ENCODE measurements at regions of chr3 and their contacts with region 1.

Region 1: DNA sequence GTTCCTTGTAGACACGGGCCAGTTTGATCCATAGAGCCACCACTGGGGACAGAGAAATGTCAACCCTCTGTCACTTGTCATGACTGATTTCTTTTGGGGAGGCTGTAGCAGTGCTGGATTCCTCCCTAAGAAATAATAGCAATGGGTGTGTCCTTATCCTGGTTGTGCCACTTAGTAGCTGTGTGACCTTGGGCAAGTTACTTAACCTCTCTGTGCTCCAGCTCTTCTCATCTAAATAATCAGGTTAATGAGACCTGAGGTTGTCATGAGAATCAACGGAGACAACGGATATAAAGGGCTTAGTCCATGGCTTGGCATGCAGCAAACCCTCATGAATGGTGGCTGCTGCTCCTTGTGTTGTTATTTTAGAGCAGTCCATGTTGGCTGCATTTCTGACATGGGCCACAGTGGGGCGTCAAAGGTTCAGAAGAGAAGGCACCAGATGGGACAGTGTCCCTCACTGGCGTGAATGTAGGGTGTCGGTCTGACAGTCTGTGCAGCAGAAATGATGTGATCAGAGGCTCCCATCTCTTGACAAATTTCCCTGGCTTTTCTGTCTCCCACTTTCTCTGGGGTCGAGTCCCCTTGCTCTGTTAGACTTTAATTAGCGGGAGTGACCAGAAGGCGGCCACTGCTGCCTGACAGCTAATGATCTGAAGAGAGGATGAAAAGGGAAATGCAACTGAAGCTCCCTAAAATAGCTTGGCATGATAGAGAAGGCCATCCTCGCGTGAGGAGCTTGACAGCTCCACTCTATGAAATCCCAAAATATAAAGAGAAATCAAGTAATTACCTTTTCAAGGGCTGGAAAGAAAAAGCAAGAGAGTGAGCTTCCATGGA is 209.4 kb downstream of the CADPS start:
- DNase-seq: peak; percentile 85
- H3K4me3 Mint-ChIP-seq: no peak overlapping the region
- H3K27ac Mint-ChIP-seq: no peak overlapping the region
- H3K4me1 Mint-ChIP-seq: peaks cover 7% of the 10 kb centered on the region
- H3K27me3 Mint-ChIP-seq: no peaks in the 10 kb centered on the region
- CTCF ChIP-seq: peak; percentile 86

Region 2: GRCh38 chr3:62622553-62623193 is 43.1 kb before region 1 on chr3:
- CTCF ChIA-PET with region 1: interaction called, 22 read pairs
- POLR2A ChIA-PET with region 1: no interaction called
- intact Hi-C with region 1: loop called (anchors 1 kb)
- DNase-seq: peak; percentile 68
- H3K4me3 Mint-ChIP-seq: no peak overlapping the region
- H3K27ac Mint-ChIP-seq: no peak overlapping the region
- H3K4me1 Mint-ChIP-seq: peaks cover 6% of the 10 kb centered on the region
- H3K27me3 Mint-ChIP-seq: no peaks in the 10 kb centered on the region
- CTCF ChIP-seq: peak; percentile 64

Region 3: DNA sequence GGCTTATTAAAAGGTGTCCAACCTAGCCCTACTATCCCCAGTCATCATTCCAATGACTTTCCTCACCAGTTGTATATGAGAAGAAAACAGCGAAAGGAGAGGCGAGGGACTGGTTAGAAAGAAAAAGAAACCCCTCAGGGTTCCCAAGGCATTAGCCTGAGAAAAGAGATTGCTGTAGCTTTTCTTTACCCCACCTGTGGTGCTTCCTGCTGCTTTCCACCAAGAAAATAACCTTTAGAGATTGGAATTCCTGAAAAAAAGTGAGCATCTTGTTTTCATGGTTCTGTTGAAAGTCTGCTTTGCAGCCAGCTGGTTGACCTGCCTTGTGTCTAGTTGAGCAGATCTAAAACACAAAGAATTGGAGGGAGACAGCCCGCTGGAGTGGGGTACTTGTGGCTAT is 13.0 kb after region 1 on chr3:
- CTCF ChIA-PET with region 1: interaction called, 35 read pairs
- POLR2A ChIA-PET with region 1: no interaction called
- intact Hi-C with region 1: no loop called
- DNase-seq: no peak
- H3K4me3 Mint-ChIP-seq: no peak overlapping the region
- H3K27ac Mint-ChIP-seq: no peak overlapping the region
- H3K4me1 Mint-ChIP-seq: peaks cover 30% of the 10 kb centered on the region
- H3K27me3 Mint-ChIP-seq: no peaks in the 10 kb centered on the region
- CTCF ChIP-seq: no peak

Region 4: DNA sequence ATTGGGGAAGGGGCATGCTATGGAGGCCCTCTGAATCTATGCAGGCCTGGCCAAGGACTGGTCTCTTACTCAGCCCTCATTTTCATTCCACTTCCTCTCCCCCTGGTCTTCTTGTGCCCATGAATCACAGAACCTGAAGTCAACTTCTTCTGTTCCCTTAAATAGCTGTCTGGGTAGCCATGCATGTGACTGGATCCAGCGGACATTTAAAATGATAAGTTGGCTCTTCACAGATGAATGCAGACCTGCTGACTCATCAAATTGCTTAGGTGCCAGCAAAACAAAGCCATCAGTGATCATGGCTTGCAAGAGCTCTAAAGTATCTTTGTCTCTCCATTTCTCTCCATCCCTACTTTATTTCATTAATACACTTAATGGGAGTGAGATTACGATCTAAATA is 299.5 kb after region 1 on chr3:
- CTCF ChIA-PET with region 1: interaction called, 5 read pairs
- POLR2A ChIA-PET with region 1: no interaction called
- intact Hi-C with region 1: loop called (anchors 10 kb)
- DNase-seq: no peak
- H3K4me3 Mint-ChIP-seq: no peak overlapping the region
- H3K27ac Mint-ChIP-seq: no peak overlapping the region
- H3K4me1 Mint-ChIP-seq: no peaks in the 10 kb centered on the region
- H3K27me3 Mint-ChIP-seq: peaks cover 82% of the 10 kb centered on the region
- CTCF ChIP-seq: no peak

Region 5: GRCh38 chr3:63207066-63207640 is 541.3 kb after region 1 on chr3:
- CTCF ChIA-PET with region 1: interaction called, 23 read pairs
- POLR2A ChIA-PET with region 1: no interaction called
- intact Hi-C with region 1: no loop called
- DNase-seq: no peak
- H3K4me3 Mint-ChIP-seq: no peak overlapping the region
- H3K27ac Mint-ChIP-seq: no peak overlapping the region
- H3K4me1 Mint-ChIP-seq: peaks cover 6% of the 10 kb centered on the region
- H3K27me3 Mint-ChIP-seq: peaks cover 15% of the 10 kb centered on the region
- CTCF ChIP-seq: no peak

Region 6: GRCh38 chr3:63245548-63246241 is 579.9 kb after region 1 on chr3:
- CTCF ChIA-PET with region 1: interaction called, 16 read pairs
- POLR2A ChIA-PET with region 1: no interaction called
- intact Hi-C with region 1: no loop called
- DNase-seq: peak; percentile 5
- H3K4me3 Mint-ChIP-seq: no peak overlapping the region
- H3K27ac Mint-ChIP-seq: no peak overlapping the region
- H3K4me1 Mint-ChIP-seq: no peaks in the 10 kb centered on the region
- H3K27me3 Mint-ChIP-seq: peaks cover 99% of the 10 kb centered on the region
- CTCF ChIP-seq: no peak